Adrenal gland (tissue), 19 donors: ENCODE measurements at regions of chr16 and their contacts with region 1.

Region 1: GRCh38 chr16:67816240-67817031 is 9.7 kb downstream of the TSNAXIP1 start:
- DNase-seq: peak; percentile 80 to 92 (median 87)
- H3K4me3 ChIP-seq: no peak overlapping the region
- H3K27ac ChIP-seq: no peak overlapping the region
- H3K4me1 ChIP-seq: no peaks in the 10 kb centered on the region
- H3K27me3 ChIP-seq: no peaks in the 10 kb centered on the region
- CTCF ChIP-seq: peak; percentile 100
- POLR2A ChIP-seq: no peak

Region 2: GRCh38 chr16:67672739-67673662 is 143.4 kb before region 1 on chr16:
- intact Hi-C with region 1: loop called in 1 of 2 experiments (anchors 10 kb)
- DNase-seq: peak; percentile 74 to 90 (median 82)
- H3K4me3 ChIP-seq: no peak overlapping the region
- H3K27ac ChIP-seq: peak overlapping the region; percentile 10 to 87 (median 47)
- H3K4me1 ChIP-seq: peaks cover 12 to 29% of the 10 kb centered on the region in 2 donors
- H3K27me3 ChIP-seq: no peaks in the 10 kb centered on the region
- CTCF ChIP-seq: peak; percentile 66 to 88 (median 82)
- POLR2A ChIP-seq: no peak

Region 3: GRCh38 chr16:67865316-67865715 is 48.9 kb after region 1 on chr16:
- intact Hi-C with region 1: loop called in 1 of 2 experiments (anchors 10 kb)
- DNase-seq: peak in 5 of 7 donors; percentile 54 to 64 (median 58)
- H3K4me3 ChIP-seq: no peak overlapping the region
- H3K27ac ChIP-seq: peak overlapping the region in 1 of 5 donors; percentile 11
- H3K4me1 ChIP-seq: peaks cover 17 to 23% of the 10 kb centered on the region in 2 donors
- H3K27me3 ChIP-seq: no peaks in the 10 kb centered on the region
- CTCF ChIP-seq: peak in 5 of 6 experiments; percentile 26 to 56 (median 44)
- POLR2A ChIP-seq: no peak

Region 4: GRCh38 chr16:67923414-67924116 is 107.1 kb after region 1 on chr16:
- intact Hi-C with region 1: loop called (anchors 2 to 10 kb)
- DNase-seq: peak in 1 of 7 donors; percentile 69
- H3K4me3 ChIP-seq: no peak overlapping the region
- H3K27ac ChIP-seq: peak overlapping the region in 1 of 5 donors; percentile 47
- H3K4me1 ChIP-seq: peaks cover 0 to 8% of the 10 kb centered on the region in 2 donors
- H3K27me3 ChIP-seq: no peaks in the 10 kb centered on the region
- CTCF ChIP-seq: no peak
- POLR2A ChIP-seq: no peak

Region 5: GRCh38 chr16:67928561-67929364 is 112.3 kb after region 1 on chr16:
- intact Hi-C with region 1: loop called (anchors 2 to 10 kb)
- DNase-seq: peak; percentile 71 to 84 (median 76)
- H3K4me3 ChIP-seq: no peak overlapping the region
- H3K27ac ChIP-seq: no peak overlapping the region
- H3K4me1 ChIP-seq: peaks cover 0 to 8% of the 10 kb centered on the region in 2 donors
- H3K27me3 ChIP-seq: no peaks in the 10 kb centered on the region
- CTCF ChIP-seq: peak; percentile 71 to 95 (median 88)
- POLR2A ChIP-seq: no peak

Region 6: GRCh38 chr16:68031951-68032350 is 215.5 kb after region 1 on chr16:
- intact Hi-C with region 1: loop called in 1 of 2 experiments (anchors 10 kb)
- DNase-seq: no peak
- H3K4me3 ChIP-seq: no peak overlapping the region
- H3K27ac ChIP-seq: no peak overlapping the region
- H3K4me1 ChIP-seq: no peaks in the 10 kb centered on the region
- H3K27me3 ChIP-seq: no peaks in the 10 kb centered on the region
- CTCF ChIP-seq: no peak
- POLR2A ChIP-seq: no peak